GM12878 (cell line): ENCODE measurements at regions of chr12 and their contacts with region 1.

Region 1: DNA sequence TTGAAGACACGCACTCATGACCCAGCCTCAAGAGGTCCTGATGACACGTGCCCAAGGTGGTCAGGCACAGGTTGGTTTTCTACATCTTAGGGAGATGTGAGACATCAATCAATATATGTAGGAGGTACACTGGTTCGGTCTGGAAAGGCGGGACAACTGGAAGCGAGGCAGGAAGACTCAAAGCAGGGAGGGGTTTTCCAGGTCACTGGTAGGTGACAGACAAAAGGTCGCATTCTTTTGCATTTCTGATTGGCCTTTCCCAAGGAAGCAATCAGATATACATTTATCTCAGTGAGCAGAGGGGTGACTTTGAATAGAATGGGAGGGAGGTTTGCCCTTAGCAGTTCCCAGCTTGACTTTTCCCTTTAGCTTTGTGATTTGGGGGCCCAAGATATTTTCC is 38.6 kb downstream of the GLT1D1 start:
- DNase-seq: no peak
- ATAC-seq: no peak
- H3K4me3 ChIP-seq: no peak overlapping the region
- H3K27ac ChIP-seq: no peak overlapping the region
- H3K4me1 ChIP-seq: no peaks in the 10 kb centered on the region
- H3K27me3 ChIP-seq: no peaks in the 10 kb centered on the region
- CTCF ChIP-seq: no peak
- EP300 ChIP-seq: no peak
- POLR2A ChIP-seq: no peak
- RAD21 ChIP-seq: no peak

Region 2: GRCh38 chr12:128906485-128907137 is 14.8 kb after region 1 on chr12:
- CTCF ChIA-PET with region 1: interaction called, 3 read pairs
- POLR2A ChIA-PET with region 1: no interaction called
- RAD21 ChIA-PET with region 1: no interaction called
- SMC1A ChIA-PET with region 1: interaction called, 10 read pairs
- in situ Hi-C with region 1: no loop called
- intact Hi-C with region 1: no loop called
- DNase-seq: no peak
- ATAC-seq: no peak
- H3K4me3 ChIP-seq: no peak overlapping the region
- H3K27ac ChIP-seq: no peak overlapping the region
- H3K4me1 ChIP-seq: no peaks in the 10 kb centered on the region
- H3K27me3 ChIP-seq: no peaks in the 10 kb centered on the region
- CTCF ChIP-seq: no peak
- EP300 ChIP-seq: no peak
- POLR2A ChIP-seq: no peak
- RAD21 ChIP-seq: no peak